Mammary epithelial cell (primary cell): ENCODE measurements at regions of chr12 and their contacts with region 1.

Region 1: GRCh38 chr12:45215419-45216229 is at the start of gene ANO6:
- DNase-seq: peak; percentile 88
- H3K4me3 ChIP-seq: peak within 1 kb of the TSS; percentile 65 to 88 (median 77)
- H3K27ac ChIP-seq: peak within 1 kb of the TSS; percentile 89
- H3K4me1 ChIP-seq: peaks cover 24% of the 10 kb centered on the region
- H3K27me3 ChIP-seq: no peaks in the 10 kb centered on the region
- CTCF ChIP-seq: peak in 1 of 2 donors; percentile 38
- total RNA-seq, gene ANO6: 57.0 to 77.5 TPM

Region 2: DNA sequence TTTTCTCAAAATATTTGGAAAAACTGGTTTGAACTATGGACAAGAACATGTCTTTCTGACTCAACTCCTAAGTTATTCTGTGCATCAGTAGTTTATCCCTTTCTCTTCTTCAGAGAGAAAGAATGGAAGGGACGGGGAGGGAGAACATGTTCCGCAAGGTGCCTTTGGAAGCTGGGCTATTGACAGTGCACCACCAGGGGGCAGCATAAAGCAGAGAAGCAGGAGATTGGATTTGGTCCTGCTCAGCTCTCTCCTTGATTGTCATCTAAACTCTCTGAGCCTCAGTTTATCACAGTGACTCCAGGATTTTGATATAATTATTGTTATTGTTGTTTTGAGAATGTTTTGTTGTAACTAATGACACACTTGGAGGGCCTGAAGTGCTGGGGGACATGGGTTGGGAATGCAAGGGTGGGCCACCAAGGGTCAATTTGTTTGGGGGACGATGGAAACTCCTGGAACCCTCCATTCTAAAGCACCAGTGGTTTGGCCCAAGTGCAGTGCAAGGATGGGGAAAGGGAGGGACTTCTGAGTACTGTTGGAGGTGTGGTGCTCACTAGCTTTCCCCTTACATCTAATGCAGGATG is 45.1 kb before region 1 on chr12:
- CTCF ChIA-PET with region 1: no interaction called
- dilution Hi-C with region 1: no loop called
- in situ Hi-C with region 1: no loop called
- intact Hi-C with region 1: loop called (anchors 2 kb)
- DNase-seq: peak; percentile 44
- H3K4me3 ChIP-seq: no peak overlapping the region
- H3K27ac ChIP-seq: no peak overlapping the region
- H3K4me1 ChIP-seq: no peaks in the 10 kb centered on the region
- H3K27me3 ChIP-seq: no peaks in the 10 kb centered on the region
- CTCF ChIP-seq: peak; percentile 95

Region 3: GRCh38 chr12:45259675-45260074 is 44.1 kb after region 1 on chr12:
- CTCF ChIA-PET with region 1: no interaction called
- dilution Hi-C with region 1: no loop called
- in situ Hi-C with region 1: no loop called
- intact Hi-C with region 1: loop called (anchors 2 kb)
- DNase-seq: peak; percentile 44
- H3K4me3 ChIP-seq: no peak overlapping the region
- H3K27ac ChIP-seq: no peak overlapping the region
- H3K4me1 ChIP-seq: peaks cover 19% of the 10 kb centered on the region
- H3K27me3 ChIP-seq: no peaks in the 10 kb centered on the region
- CTCF ChIP-seq: no peak

Region 4: GRCh38 chr12:45336331-45337064 is 120.9 kb after region 1 on chr12:
- CTCF ChIA-PET with region 1: no interaction called
- dilution Hi-C with region 1: no loop called
- in situ Hi-C with region 1: no loop called
- intact Hi-C with region 1: loop called (anchors 2 kb)
- DNase-seq: peak; percentile 88
- H3K4me3 ChIP-seq: no peak overlapping the region
- H3K27ac ChIP-seq: peak overlapping the region; percentile 82
- H3K4me1 ChIP-seq: peaks cover 17% of the 10 kb centered on the region
- H3K27me3 ChIP-seq: no peaks in the 10 kb centered on the region
- CTCF ChIP-seq: no peak

Region 5: GRCh38 chr12:45368841-45369489 is 153.3 kb after region 1 on chr12:
- CTCF ChIA-PET with region 1: no interaction called
- dilution Hi-C with region 1: no loop called
- in situ Hi-C with region 1: no loop called
- intact Hi-C with region 1: no loop called
- DNase-seq: no peak
- H3K4me3 ChIP-seq: no peak overlapping the region
- H3K27ac ChIP-seq: no peak overlapping the region
- H3K4me1 ChIP-seq: no peaks in the 10 kb centered on the region
- H3K27me3 ChIP-seq: no peaks in the 10 kb centered on the region
- CTCF ChIP-seq: no peak

Region 6: GRCh38 chr12:45415393-45415817 is 199.8 kb after region 1 on chr12:
- CTCF ChIA-PET with region 1: no interaction called
- dilution Hi-C with region 1: no loop called
- in situ Hi-C with region 1: no loop called
- intact Hi-C with region 1: loop called (anchors 2 kb)
- DNase-seq: peak; percentile 99
- H3K4me3 ChIP-seq: no peak overlapping the region
- H3K27ac ChIP-seq: peak overlapping the region; percentile 31
- H3K4me1 ChIP-seq: peaks cover 7% of the 10 kb centered on the region
- H3K27me3 ChIP-seq: no peaks in the 10 kb centered on the region
- CTCF ChIP-seq: no peak